ENCODE measurements at regions of chr1 and their contacts with region 1.

Region 1: DNA sequence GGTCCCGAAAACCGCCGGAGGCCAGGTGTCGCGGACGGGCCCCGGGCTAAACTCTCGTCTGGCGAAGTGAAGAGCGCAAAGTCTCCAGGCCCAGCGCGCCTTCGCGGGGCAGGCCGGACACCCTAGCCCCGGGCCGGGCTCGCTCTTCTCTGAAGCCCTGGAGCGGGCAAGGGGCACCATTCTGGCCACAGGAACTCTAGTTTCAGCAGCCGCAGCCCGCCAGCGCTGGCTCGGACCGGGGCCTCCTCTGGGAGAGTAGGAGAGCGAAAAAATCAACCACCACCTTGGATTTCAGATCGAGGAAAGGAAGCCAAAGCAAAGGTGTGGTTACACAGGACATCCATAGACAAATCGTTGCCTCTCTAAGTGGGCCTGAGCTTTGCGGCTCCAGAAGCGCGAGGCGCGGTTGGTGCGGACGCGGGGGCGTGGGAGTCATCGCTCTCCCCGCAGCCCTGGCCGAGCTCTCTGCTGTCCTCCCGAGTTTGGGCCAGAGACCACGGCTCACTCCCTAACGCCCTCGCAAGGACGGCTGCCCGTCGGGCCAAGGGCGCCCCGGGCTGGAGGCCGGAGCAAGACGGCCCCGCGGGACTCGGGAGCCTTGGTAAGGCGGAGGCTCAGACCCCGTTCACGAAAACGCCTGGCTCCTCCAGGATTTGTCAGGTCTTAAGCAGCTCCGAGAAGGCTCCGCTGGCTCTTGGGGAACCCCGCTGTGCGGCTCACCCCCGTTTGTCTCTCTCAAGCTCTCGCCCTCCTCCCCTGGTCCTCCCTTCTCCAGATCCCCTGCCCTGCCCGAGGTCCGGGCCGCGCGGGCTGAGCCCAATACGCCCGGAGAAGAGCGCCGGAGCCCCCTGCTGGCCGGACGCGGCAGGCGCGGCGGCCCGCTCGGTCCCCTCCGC is 132.9 kb upstream of the DPYD start:
- DNase-seq: peak; percentile 68
- H3K4me3 ChIP-seq: peak overlapping the region; percentile 15 to 53 (median 48)
- H3K27ac ChIP-seq: no peak overlapping the region
- H3K4me1 ChIP-seq: peaks cover 0 to 16% (median 12%) of the 10 kb centered on the region in 4 donors
- H3K27me3 ChIP-seq: peaks cover 0 to 40% (median 17%) of the 10 kb centered on the region in 3 donors
- CTCF ChIP-seq: peak; percentile 24 to 96 (median 48)
- EP300 ChIP-seq: no peak
- POLR2A ChIP-seq: no peak

Region 2: GRCh38 chr1:96966536-96967138 is 1087.1 kb before region 1 on chr1:
- intact Hi-C with region 1: loop called (anchors 2 kb)
- DNase-seq: peak; percentile 80
- H3K4me3 ChIP-seq: no peak overlapping the region
- H3K27ac ChIP-seq: no peak overlapping the region
- H3K4me1 ChIP-seq: peaks cover 0 to 55% (median 37%) of the 10 kb centered on the region in 4 donors
- H3K27me3 ChIP-seq: no peaks in the 10 kb centered on the region
- CTCF ChIP-seq: peak; percentile 52 to 88 (median 83)
- EP300 ChIP-seq: no peak
- POLR2A ChIP-seq: no peak

Measured in sigmoid colon (tissue), 7 donors.